GM10248 (cell line): ENCODE measurements at regions of chr17 and their contacts with region 1.

Region 1: GRCh38 chr17:27760069-27760885 is 40.1 kb downstream of the NOS2 start:
- DNase-seq: peak; percentile 73
- CTCF ChIP-seq: peak; percentile 94

Region 2: GRCh38 chr17:27544350-27545131 is 215.7 kb before region 1 on chr17:
- CTCF ChIA-PET with region 1: no interaction called
- POLR2A ChIA-PET with region 1: no interaction called
- DNase-seq: peak; percentile 85
- CTCF ChIP-seq: no peak

Region 3: DNA sequence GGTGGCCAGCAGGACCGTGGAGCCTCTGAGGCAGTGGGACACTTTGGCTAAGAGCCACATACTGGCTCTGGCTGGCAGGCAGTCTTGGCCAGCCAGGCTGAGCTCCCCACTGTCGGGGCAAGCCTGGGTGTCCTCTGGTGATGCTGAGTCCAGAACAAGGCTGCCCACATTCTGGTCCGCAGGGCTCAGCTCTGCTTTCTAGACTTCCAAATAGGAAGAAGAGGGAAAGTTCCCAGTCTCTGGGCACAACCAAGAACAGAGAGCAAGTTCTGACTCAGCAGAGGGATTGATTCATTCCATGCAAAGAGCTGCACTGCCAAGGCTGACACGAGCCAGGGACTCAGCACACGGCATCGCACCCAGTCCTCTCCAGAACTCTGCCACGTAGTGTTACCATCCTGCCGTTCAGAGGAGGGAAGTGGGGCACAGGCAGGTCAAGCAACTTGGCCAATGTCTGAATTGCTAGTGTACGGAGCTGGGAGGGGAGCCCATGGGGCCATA is 18.9 kb before region 1 on chr17:
- CTCF ChIA-PET with region 1: interaction called, 34 read pairs
- POLR2A ChIA-PET with region 1: no interaction called
- DNase-seq: no peak
- CTCF ChIP-seq: no peak

Region 4: GRCh38 chr17:27824745-27825144 is 64.5 kb after region 1 on chr17:
- CTCF ChIA-PET with region 1: no interaction called
- POLR2A ChIA-PET with region 1: no interaction called
- DNase-seq: no peak
- CTCF ChIP-seq: no peak

Region 5: GRCh38 chr17:27892866-27893769 is 132.8 kb after region 1 on chr17 and contains the start of gene LYRM9:
- CTCF ChIA-PET with region 1: interaction called, 10 read pairs
- POLR2A ChIA-PET with region 1: no interaction called
- DNase-seq: peak; percentile 96
- CTCF ChIP-seq: peak; percentile 95

Region 6: DNA sequence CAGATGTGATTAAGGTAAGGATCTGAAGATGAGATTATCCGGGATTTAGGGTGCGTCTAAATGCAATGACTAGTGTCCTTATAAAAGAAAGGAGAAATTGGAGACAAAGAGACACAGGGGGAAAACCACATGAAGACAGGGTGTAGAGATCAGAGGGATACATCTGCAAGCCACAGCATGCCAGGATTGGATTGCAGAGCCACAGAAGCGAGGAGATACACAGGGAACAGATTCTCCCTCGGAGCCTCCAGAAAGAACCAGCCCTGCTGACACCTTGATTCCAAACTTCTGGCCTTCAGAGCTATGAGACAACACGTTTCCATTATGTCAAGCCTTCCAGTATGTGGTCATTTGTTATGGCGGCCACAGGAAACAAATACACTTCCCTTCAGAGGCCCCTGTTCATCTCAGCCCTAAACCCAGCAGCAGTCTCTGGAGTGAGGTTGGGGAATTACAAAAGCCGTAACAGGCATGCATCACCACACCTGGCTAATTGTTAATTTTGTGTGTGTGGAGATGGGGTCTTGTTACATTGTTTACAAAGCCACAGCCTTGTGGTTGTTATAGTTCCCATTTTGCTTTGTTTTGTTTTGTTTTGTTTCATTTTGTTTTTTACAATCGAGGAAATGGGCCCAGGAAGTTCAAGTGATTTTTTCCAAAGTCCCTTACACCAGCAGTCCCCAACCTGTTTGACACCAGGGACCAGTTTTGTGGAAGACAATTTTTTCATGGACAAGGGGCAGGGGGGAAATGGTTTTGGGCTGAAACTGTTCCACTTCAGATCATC is 184.5 kb after region 1 on chr17:
- CTCF ChIA-PET with region 1: no interaction called
- POLR2A ChIA-PET with region 1: no interaction called
- DNase-seq: no peak
- CTCF ChIP-seq: no peak